Activated CD4-positive, alpha-beta memory T cell treated with anti-CD3 and anti-CD28 coated beads, Interleukin-2, amount 10 ng/mL, durations not matched to agents 7 days and 5 days (primary cell): ENCODE measurements at regions of chr13 and their contacts with region 1.

Region 1: DNA sequence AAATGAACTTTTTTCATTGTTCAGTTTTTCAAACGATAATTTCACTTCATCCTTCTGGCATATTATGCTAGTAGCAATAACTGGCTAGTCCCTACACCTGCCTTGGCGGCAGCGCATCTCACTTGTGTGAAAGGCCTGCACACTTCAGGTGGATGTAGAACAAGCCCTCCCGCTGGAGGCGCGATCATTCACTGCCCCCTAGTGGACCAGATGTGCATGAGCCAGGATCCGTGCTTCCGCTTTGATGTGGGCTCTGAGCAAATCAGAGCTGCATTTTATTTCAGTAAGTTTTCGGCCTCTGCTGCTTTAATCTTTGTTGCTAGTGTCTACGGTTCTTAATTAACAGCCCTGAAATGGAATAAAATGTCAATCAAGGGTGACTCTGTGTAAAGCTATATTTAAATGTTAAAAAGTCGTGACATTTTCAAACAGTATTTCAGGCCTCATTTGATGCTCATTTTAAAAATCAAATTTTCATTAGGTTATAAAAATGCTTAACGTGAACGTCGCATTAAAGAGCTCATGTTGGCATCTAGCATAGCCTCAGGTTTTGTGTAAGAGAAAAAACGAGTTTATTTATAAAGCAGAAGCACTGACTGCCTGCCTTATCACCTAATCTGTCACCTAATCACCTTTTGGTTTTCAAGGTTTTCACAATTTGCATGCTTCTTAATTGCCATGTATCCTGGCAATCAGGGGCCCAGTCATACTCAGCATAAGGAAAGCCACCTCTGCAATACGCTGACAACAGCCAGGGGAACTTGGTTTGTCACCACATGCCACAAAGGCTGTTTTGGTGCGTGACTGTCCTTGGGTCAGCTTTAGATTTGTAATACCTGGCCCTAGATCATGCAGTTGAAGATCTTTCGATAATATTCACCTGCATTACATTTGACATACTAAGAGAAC is 112.2 kb downstream of the TEX26 start:
- DNase-seq: peak; percentile 87
- H3K4me3 Mint-ChIP-seq: peak overlapping the region; percentile 38
- H3K27ac Mint-ChIP-seq: peak overlapping the region; percentile 86
- H3K4me1 Mint-ChIP-seq: peaks cover 37% of the 10 kb centered on the region
- H3K27me3 Mint-ChIP-seq: peaks cover 27% of the 10 kb centered on the region

Region 2: DNA sequence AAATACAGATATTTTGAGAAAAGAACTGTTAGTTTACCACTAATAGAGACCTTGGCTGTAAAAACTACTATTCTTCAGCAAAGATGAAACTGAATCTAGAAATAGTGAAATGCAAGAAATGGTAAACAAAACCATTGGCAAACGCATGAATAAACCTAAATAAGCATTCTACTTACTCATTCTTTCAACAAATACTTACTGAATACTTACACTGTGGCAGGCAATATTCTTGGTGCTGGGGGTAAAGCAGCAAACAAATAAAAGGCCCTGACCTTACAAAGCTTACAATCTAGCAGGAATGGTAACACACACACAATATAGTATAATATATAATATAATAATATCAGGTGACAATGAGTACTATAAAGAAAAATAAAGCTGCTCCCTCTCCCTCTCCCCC is 776.0 kb before region 1 on chr13:
- CTCF ChIA-PET with region 1: no interaction called
- POLR2A ChIA-PET with region 1: no interaction called
- DNase-seq: no peak
- H3K4me3 Mint-ChIP-seq: no peak overlapping the region
- H3K27ac Mint-ChIP-seq: no peak overlapping the region
- H3K4me1 Mint-ChIP-seq: no peaks in the 10 kb centered on the region
- H3K27me3 Mint-ChIP-seq: no peaks in the 10 kb centered on the region

Region 3: DNA sequence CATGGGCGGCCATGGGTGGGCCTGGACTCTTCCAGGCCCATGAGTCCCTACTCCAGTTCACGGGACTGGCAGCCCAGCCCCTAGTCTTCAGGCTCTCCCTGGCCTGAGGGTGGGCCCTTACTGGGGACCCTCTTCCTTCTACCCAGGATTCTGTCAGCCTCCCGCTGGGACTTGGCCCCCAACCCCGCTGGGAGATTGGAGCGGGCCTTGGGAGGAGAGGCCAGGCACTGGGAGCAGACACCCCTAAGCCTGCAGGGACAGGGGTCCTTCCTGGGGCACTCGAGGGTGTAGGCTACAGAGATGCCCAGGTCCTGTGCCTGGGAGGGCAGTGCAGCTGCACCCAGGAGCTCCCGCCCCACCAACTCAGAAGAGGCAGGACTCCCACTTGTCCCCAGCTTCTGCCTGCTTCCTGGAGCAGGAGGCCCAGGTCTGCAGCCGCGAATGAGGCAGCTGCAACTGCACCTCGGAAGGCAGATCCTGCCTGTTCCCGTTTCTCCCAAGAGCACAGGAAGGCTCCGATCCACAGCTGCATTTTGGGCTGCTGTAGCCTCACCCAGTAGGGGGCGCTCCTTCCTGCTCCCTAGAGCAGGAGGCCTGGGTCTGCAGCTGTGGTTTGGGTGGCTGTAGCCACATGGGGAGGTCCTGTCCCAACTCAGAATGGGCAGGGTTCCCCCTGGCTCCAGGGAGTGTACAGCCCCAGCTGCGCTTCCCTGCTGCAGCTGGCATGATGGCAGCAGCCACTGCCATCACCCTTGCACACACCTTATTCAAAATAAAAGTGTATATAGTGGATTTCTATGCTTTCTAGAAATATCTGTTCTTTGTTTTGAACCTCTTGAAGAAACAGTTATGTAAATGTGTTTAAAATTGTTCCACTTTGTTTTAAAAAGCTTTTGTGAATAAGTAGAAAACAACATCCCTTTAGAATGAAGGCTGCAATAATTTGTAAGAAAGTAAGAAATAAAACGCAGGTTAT is 65.4 kb before region 1 on chr13:
- CTCF ChIA-PET with region 1: interaction called, 43 read pairs
- POLR2A ChIA-PET with region 1: no interaction called
- DNase-seq: peak; percentile 52
- H3K4me3 Mint-ChIP-seq: no peak overlapping the region
- H3K27ac Mint-ChIP-seq: no peak overlapping the region
- H3K4me1 Mint-ChIP-seq: peaks cover 3% of the 10 kb centered on the region
- H3K27me3 Mint-ChIP-seq: peaks cover 29% of the 10 kb centered on the region

Region 4: DNA sequence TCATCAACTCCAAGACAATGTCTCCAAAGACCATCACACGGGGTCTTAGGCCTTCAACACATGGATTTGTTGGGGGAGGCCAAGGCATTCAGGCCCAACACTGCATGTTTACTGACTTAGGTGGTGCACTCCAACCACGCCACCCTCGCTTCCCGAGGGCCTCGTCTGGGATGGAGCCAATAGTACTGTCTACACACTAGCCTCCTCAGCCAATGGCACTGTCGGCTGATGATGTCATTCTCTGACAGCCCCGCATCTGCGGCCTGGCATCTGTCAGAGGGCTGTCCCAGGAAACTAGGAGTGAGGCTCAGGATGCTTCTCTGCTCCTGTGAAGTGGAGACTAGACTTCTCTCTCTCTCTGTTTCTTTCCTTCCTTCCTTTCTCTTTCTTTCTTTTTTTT is 15.5 kb before region 1 on chr13:
- CTCF ChIA-PET with region 1: interaction called, 21 read pairs
- POLR2A ChIA-PET with region 1: no interaction called
- DNase-seq: no peak
- H3K4me3 Mint-ChIP-seq: no peak overlapping the region
- H3K27ac Mint-ChIP-seq: no peak overlapping the region
- H3K4me1 Mint-ChIP-seq: no peaks in the 10 kb centered on the region
- H3K27me3 Mint-ChIP-seq: peaks cover 44% of the 10 kb centered on the region

Region 5: GRCh38 chr13:31073859-31074718 is 29.5 kb after region 1 on chr13:
- CTCF ChIA-PET with region 1: interaction called, 11 read pairs
- POLR2A ChIA-PET with region 1: interaction called, 4 read pairs
- DNase-seq: peak; percentile 38
- H3K4me3 Mint-ChIP-seq: no peak overlapping the region
- H3K27ac Mint-ChIP-seq: peak overlapping the region; percentile 50
- H3K4me1 Mint-ChIP-seq: peaks cover 10% of the 10 kb centered on the region
- H3K27me3 Mint-ChIP-seq: peaks cover 2% of the 10 kb centered on the region

Region 6: GRCh38 chr13:31174018-31174417 is 129.4 kb after region 1 on chr13:
- CTCF ChIA-PET with region 1: no interaction called
- POLR2A ChIA-PET with region 1: no interaction called
- DNase-seq: no peak
- H3K4me3 Mint-ChIP-seq: no peak overlapping the region
- H3K27ac Mint-ChIP-seq: no peak overlapping the region
- H3K4me1 Mint-ChIP-seq: peaks cover 10% of the 10 kb centered on the region
- H3K27me3 Mint-ChIP-seq: peaks cover 12% of the 10 kb centered on the region